AG04450 (cell line): ENCODE measurements at regions of chr16 and their contacts with region 1.

Region 1: GRCh38 chr16:77591347-77591746 is 131.0 kb upstream of the NUDT7 start:
- DNase-seq: no peak
- H3K4me3 ChIP-seq: no peak overlapping the region
- H3K27ac ChIP-seq: no peak overlapping the region
- H3K27me3 ChIP-seq: peaks cover 2% of the 10 kb centered on the region
- CTCF ChIP-seq: no peak

Region 2: GRCh38 chr16:77387815-77388209 is 203.5 kb before region 1 on chr16:
- CTCF ChIA-PET with region 1: no interaction called
- POLR2A ChIA-PET with region 1: no interaction called
- DNase-seq: no peak
- H3K4me3 ChIP-seq: no peak overlapping the region
- H3K27ac ChIP-seq: no peak overlapping the region
- H3K27me3 ChIP-seq: no peaks in the 10 kb centered on the region
- CTCF ChIP-seq: no peak

Region 3: GRCh38 chr16:77459534-77460254 is 131.7 kb before region 1 on chr16:
- CTCF ChIA-PET with region 1: interaction called, 11 read pairs
- POLR2A ChIA-PET with region 1: no interaction called
- DNase-seq: no peak
- H3K4me3 ChIP-seq: no peak overlapping the region
- H3K27ac ChIP-seq: no peak overlapping the region
- H3K27me3 ChIP-seq: no peaks in the 10 kb centered on the region
- CTCF ChIP-seq: no peak

Region 4: DNA sequence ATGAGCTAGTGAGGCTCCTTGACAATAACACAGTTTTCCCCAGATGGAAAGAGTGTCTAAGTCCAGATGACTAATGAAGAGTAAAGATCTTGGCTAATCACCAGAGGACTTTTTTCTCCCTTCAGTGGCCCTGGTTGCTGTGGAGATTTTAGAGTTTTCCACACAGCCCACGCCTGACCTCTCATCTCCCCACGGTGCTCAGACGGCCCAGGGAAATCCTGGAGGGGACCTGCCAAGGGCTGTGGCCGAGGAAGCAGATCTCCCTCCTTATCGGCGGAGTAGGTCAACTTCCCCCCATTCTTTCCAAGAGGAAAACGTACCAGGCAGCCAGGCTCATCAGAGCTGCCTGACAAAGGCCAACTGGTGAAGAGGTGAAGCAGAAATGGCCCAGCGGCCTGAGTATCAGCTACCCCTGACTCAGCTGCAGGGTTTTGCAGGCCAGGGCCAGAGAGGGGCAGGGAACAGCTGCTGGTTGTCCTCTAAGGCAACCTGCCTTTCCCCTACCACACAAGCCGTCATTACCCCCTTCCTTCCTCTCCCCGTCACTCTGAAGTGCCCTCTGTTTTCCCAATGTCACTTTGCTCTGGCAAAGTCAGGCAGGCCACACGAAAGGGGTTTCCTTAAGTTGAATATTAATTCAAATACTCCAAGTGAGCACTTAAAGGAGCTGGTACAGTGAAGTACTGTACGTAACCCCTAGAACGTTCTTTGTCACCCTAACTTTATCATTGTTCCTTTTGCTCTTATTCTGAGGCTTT is 16.3 kb before region 1 on chr16:
- CTCF ChIA-PET with region 1: no interaction called
- POLR2A ChIA-PET with region 1: no interaction called
- DNase-seq: no peak
- H3K4me3 ChIP-seq: no peak overlapping the region
- H3K27ac ChIP-seq: no peak overlapping the region
- H3K27me3 ChIP-seq: no peaks in the 10 kb centered on the region
- CTCF ChIP-seq: no peak